BJ (cell line): ENCODE measurements at regions of chr6 and their contacts with region 1.

Region 1: GRCh38 chr6:30742316-30743098 is at the start of gene FLOT1:
- DNase-seq: peak; percentile 86
- H3K4me3 ChIP-seq: peak within 1 kb of the TSS; percentile 65
- H3K27me3 ChIP-seq: no peaks in the 10 kb centered on the region
- CTCF ChIP-seq: no peak
- polyA plus RNA-seq, gene FLOT1: 205 and 292 TPM in 2 replicates

Region 2: GRCh38 chr6:30295837-30296236 is 446.7 kb before region 1 on chr6:
- CTCF ChIA-PET with region 1: no interaction called
- POLR2A ChIA-PET with region 1: no interaction called
- DNase-seq: no peak
- H3K4me3 ChIP-seq: no peak overlapping the region
- H3K27me3 ChIP-seq: no peaks in the 10 kb centered on the region
- CTCF ChIP-seq: no peak

Region 3: DNA sequence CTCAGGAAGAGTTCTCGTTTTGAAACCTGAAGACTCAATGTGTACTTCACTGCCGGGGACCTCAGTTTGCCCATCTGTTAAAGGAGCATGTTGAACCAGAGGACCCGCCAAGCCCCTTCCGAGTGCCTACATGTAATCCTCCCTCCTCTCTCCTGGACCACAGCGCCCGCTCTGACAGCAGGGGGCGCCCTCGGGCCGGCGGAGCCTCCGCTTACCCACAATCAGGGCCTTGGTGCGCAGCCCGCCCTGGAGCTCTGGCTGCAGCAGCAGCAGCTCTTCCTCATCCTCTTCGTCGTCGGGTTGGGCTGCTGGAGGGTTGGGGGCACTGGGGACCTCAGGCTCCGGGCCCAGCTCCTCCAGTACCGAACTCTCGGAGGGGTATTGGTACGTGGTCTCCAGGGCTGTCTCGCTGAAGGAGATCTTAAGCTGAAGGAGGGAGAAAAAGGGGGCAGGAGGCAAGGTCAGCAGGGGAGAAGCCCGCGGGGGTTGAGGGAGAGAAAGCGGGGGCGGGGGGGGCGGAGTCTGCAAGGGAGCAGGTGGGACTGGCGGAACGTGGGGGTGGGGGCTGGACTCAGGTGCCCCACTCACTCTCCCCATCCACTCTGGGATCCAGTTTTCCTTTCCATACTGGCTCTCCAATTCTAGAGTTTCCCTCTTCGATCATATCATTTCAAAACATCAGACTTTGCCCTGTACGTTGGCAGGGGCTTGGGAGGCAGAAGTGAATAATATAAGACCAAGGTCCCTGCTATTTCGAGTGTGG is 63.4 kb before region 1 on chr6:
- CTCF ChIA-PET with region 1: interaction called, 13 read pairs
- POLR2A ChIA-PET with region 1: no interaction called
- DNase-seq: no peak
- H3K4me3 ChIP-seq: no peak overlapping the region; the same call in 1 of the 2 replicates
- H3K27me3 ChIP-seq: no peaks in the 10 kb centered on the region
- CTCF ChIP-seq: peak; percentile 97

Region 4: DNA sequence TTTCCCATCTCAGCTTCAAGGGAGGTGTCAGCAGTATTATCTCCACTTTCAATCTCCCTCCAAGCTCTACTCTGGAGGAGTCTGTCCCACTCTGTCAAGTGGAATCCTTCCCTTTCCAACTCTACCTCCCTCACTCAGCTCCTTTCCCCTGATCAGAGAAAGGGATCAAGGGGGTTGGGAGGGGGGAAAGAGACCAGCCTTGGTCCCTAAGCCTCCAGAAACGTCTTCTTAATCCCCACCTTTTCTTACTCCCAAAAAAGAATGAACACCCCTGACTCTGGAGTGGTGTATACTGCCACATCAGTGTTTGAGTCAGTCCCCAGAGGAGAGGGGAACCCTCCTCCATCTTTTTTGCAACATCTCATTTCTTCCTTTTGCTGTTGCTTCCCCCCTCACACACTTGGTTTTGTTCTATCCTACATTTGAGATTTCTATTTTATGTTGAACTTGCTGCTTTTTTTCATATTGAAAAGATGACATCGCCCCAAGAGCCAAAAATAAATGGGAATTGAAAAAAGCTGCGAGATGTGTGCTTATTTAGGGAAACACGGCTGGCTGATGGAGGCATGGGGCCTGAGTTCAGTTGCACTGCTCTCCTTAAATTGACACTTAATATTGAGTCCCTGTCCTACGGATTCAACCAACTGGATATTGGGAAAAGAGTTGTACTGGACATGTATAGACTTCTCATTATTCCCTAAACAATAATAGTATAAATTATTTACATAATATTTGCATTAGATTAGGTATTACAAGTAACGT is 17.4 kb before region 1 on chr6:
- CTCF ChIA-PET with region 1: interaction called, 8 read pairs
- POLR2A ChIA-PET with region 1: interaction called, 24 read pairs
- DNase-seq: no peak
- H3K4me3 ChIP-seq: no peak overlapping the region
- H3K27me3 ChIP-seq: no peaks in the 10 kb centered on the region
- CTCF ChIP-seq: no peak

Region 5: GRCh38 chr6:30821862-30822782 is 79.6 kb after region 1 on chr6:
- CTCF ChIA-PET with region 1: interaction called, 16 read pairs
- POLR2A ChIA-PET with region 1: interaction called, 5 read pairs
- DNase-seq: no peak
- H3K4me3 ChIP-seq: no peak overlapping the region
- H3K27me3 ChIP-seq: no peaks in the 10 kb centered on the region
- CTCF ChIP-seq: peak; percentile 56

Region 6: DNA sequence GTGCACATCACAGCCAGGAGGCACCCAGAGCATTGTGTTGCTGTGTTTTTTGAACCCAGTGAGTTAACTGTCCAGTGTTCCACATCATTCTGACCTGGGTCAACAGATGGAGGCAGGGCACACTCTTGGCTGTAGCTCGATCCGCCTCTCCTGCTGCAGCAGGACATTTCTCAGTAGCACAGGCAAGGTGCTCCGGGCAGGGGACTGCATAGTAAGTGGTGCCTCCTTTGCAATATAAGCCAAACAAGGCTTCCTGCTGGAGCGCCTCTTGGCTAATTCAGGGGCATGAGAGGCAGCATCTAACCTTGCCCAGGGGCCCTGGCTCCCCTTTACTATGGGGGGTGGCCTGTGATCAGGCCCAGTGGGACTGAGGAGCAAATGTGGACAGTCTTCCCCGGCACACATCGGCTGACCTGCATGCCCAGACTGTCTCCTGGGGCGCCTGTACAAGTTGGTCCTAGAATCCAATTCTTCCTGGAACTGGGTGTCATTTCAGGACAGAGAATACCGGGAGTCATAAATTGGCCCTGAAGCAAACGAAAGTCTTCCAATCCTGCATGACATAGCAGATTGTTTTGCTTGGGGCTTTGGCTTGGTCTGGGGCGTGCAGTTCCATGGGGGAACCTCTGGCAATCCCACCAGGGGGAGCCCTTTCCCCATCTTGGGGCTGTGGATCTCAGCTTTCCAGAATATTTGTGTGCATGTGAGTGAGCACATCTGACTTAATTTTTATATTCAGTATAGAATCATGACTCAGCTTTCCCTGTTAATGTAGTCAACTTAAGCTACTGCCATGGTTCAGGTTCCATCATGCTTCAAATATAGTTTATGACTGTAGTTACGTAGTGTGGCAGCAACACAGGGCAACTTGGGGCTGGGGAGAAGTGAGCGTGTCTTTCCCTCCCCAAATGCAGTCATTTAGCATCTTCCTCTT is 85.8 kb after region 1 on chr6:
- CTCF ChIA-PET with region 1: interaction called, 16 read pairs
- POLR2A ChIA-PET with region 1: interaction called, 3 read pairs
- DNase-seq: peak; percentile 69
- H3K4me3 ChIP-seq: no peak overlapping the region
- H3K27me3 ChIP-seq: no peaks in the 10 kb centered on the region
- CTCF ChIP-seq: peak; percentile 92

Region 7: DNA sequence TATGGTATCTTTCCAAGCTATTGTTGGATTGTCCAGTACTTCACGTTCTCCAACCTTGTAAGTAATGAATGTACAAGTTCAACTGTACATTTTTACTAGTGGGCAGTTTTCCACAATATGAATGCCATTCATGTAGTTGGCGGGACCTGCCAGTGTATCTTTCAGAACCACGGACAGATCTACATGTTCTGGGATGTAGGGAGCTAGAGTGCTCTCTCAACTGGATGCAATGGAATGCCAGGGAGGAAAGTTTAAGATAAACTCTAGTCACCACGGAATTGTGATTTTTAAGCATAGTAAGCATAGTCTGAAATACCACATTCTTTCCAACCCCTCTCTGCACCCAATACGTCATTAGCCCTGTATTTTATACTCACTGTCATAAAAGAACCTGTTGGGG is 550.8 kb after region 1 on chr6:
- CTCF ChIA-PET with region 1: no interaction called
- POLR2A ChIA-PET with region 1: no interaction called
- DNase-seq: no peak
- H3K4me3 ChIP-seq: no peak overlapping the region
- H3K27me3 ChIP-seq: peaks cover 9% of the 10 kb centered on the region; the same call in 1 of the 2 replicates
- CTCF ChIP-seq: no peak